Left ventricle myocardium superior (tissue), 1 donor: ENCODE measurements at regions of chr10 and their contacts with region 1.

Region 1: DNA sequence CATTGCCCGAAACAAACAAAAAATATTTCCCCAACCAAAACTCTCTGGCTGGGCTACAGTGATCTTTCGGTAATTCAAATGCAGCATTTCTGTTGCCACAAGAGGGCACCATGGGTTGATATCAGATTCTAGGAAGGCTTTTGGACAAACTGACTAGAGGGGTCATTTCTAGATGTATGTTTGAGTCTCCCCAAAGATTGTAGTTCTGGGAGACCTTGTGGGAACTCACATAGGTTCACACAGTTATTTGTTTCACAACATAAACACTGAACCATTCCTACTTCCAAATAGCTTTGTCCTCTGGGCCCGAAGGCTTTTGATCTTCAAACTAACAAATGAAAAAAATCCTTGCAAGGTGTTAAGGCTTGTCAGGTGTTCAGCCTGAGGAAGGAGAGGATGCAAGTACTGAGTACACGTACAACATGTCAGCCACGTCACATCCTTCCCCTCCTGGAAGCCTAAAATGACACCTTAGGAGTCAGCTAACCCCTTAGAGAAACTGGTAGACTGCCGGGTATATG is 37.0 kb upstream of the IL15RA start:
- DNase-seq: no peak
- ATAC-seq: peak; percentile 56

Region 2: GRCh38 chr10:5376450-5376849 is 637.9 kb before region 1 on chr10:
- intact Hi-C with region 1: no loop called
- DNase-seq: no peak
- ATAC-seq: no peak

Region 3: DNA sequence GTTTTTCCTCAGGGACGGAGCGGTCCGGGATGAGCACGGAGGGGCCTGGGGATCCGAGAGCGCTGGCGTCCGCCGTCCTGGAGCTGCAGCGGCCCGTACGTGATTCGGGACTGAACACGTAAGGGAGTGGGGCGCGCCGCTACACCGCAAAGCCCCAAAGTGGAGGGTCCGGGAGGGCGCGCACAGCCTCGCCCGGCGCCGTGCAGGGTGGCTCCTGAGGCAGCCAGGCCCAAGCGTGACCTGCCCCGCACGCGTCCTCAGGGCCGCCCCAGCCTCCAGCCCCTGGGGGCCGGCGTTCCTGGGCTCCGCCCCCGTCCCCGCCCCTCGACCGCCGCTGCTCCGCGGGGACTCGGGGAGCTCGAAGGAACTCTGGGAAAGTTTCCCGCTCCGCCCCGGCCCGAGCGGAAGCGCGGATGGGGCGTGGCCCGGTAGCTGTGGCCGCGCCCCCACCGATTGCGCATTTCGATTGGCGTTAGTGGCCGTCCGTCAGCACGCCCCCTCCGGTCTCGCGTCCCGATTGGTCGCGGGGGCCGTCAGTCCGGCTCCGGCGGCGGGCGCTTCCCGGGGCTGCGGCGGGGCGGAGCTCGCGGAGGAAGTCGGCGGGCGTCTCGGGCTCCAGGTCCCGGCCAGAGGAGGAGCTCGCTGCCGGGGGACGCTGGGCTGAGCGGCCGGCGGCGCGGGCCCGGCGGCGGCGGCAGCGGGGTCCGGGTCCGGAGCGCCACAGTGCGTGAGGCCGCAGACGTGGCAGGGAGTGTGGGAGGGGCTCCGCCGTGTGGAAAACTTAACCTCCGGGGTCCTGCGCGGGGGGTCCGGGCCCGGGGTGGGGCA is 124.5 kb before region 1 on chr10 and contains the starts of genes ANKRD16 and FBH1:
- intact Hi-C with region 1: no loop called
- DNase-seq: peak; percentile 99
- ATAC-seq: peak; percentile 96
- total RNA-seq, gene ANKRD16: 3.8 TPM
- total RNA-seq, gene FBH1: 78.7 TPM

Region 4: DNA sequence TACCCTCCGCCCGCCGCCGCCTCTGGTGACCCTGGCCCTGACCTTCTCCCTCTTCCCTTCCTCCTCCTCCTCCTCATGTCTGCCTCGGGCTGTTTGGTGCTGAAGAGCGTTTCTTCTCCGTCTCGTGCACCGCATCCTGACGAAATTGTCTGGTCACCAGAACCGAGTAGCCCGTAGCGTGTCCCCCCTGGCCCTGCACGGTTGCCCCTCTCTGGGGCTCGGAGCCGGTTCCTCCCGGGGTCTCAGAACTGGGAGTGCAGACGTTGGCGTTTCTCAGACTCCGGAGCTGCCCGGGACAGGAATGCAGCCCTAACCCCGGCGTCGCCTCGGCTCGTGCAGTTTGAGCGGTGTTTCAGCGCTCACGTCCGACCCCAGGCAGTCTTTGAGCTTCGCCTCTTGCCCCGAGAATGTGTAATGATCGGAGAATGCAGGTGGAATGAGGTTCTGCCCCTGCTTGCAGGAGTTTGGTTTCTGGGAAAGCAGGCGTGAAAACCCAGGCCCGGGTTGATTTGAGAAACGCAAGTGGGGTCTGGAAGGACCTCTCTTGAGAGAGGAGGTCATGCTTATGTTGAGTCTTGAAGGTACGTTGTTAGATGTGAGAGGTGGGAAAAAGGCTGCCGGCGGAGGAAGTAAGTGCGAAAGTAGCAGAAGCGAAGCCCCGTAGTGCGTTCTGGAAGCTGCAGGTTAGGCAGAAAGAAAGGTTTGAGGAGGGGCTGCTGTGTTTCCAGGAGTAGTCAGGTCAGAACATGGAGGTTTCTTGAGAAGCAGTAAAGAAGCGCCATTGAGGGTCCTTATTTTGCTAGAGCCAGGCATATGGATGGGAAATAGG is 75.3 kb after region 1 on chr10:
- intact Hi-C with region 1: loop called (anchors 5 kb)
- DNase-seq: no peak
- ATAC-seq: no peak

Region 5: GRCh38 chr10:6401562-6402348 is 387.5 kb after region 1 on chr10:
- intact Hi-C with region 1: loop called (anchors 10 kb)
- DNase-seq: peak; percentile 74
- ATAC-seq: peak; percentile 98